ENCODE measurements at regions of chr17 and their contacts with region 1.

Region 1: GRCh38 chr17:4565209-4566141 is 5.1 kb upstream of the GGT6 start:
- DNase-seq: peak; percentile 92
- ATAC-seq: peak; percentile 90 to 92
- H3K4me3 ChIP-seq: no peak overlapping the region
- H3K27ac ChIP-seq: peak overlapping the region in 1 of 2 experiments; percentile 25; a peak in 1 of 6 replicates
- H3K4me1 ChIP-seq: 0 out of 3 replicates have a peak, but pooled peaks cover 4% of the 10 kb centered on the region
- CTCF ChIP-seq: peak; percentile 96
- EP300 ChIP-seq: no peak
- POLR2A ChIP-seq: no peak
- RAD21 ChIP-seq: peak; percentile 51 to 68

Region 2: DNA sequence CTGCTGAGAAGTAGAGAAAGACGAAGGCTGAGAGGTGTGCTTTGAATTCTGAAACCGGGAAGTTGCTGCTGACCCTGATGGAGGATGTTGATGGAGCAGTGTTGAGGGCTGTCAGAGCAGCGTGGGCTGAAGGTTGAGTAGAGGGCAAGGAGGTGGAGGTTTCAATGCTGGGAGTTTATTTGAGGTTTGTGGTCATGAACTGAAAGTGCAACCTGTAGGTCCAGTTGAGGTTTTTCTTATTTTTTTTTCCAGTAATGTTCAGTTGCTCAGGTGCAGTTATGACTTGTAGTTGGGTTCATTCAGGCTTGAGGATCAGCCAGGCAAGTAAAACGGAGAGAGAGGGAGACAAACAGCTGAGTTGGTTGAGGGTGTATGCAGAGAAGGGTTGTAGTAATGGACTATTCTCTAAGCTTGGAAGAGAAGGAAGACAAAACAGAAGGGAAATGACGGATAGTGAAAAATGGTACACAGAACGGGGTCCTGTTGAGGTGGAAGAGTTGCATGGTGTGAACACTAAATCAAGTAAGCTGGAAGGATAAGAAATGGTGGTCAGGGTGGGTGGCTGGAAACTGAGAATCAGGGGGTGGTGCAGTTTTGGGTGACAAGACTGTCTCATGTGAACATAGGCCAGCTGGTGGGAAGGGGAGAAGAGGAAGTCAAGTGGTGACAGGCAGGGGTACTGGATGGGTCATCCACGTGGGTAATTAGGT is 190.3 kb before region 1 on chr17:
- CTCF ChIA-PET with region 1: no interaction called
- POLR2A ChIA-PET with region 1: no interaction called
- DNase-seq: no peak
- ATAC-seq: no peak; a peak in 3 of 6 replicates
- H3K4me3 ChIP-seq: no peak overlapping the region
- H3K27ac ChIP-seq: no peak overlapping the region
- H3K4me1 ChIP-seq: no peaks in the 10 kb centered on the region
- CTCF ChIP-seq: no peak
- EP300 ChIP-seq: no peak
- POLR2A ChIP-seq: no peak
- RAD21 ChIP-seq: no peak

Region 3: GRCh38 chr17:4420692-4421131 is 144.8 kb before region 1 on chr17:
- CTCF ChIA-PET with region 1: interaction called, 14 read pairs
- POLR2A ChIA-PET with region 1: no interaction called
- DNase-seq: peak; percentile 85 to 90
- ATAC-seq: peak; percentile 93 to 95
- H3K4me3 ChIP-seq: no peak overlapping the region
- H3K27ac ChIP-seq: no peak overlapping the region
- H3K4me1 ChIP-seq: no peaks in the 10 kb centered on the region
- CTCF ChIP-seq: peak; percentile 90
- EP300 ChIP-seq: no peak
- POLR2A ChIP-seq: no peak
- RAD21 ChIP-seq: peak; percentile 85 to 93

Region 4: DNA sequence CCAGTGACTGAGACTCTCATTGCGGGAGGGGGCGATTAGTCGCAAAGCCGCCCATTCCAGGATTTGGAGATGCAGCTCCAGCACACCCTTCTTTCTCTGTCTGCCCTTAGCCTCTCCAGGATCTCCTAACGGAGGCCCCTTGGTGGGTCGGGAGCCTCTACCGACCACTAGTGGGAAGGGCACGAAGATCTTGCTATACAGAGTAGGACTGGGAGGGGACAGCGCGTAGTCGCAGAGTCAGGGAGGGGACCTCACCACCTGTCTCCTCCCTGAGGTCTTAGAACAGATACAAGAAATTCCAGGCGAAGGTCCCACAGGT is 18.3 kb after region 1 on chr17:
- CTCF ChIA-PET with region 1: interaction called, 186 read pairs
- POLR2A ChIA-PET with region 1: interaction called, 4 read pairs
- DNase-seq: peak; percentile 68 to 94
- ATAC-seq: peak; percentile 73 to 91
- H3K4me3 ChIP-seq: peak overlapping the region; percentile 49
- H3K27ac ChIP-seq: peak overlapping the region; percentile 23 to 70; a peak in 3 of 6 replicates
- H3K4me1 ChIP-seq: peaks cover 7% of the 10 kb centered on the region; the same call in 2 of the 3 replicates
- CTCF ChIP-seq: no peak; the same call in 2 of the 3 replicates
- EP300 ChIP-seq: no peak
- POLR2A ChIP-seq: no peak
- RAD21 ChIP-seq: no peak

Region 5: DNA sequence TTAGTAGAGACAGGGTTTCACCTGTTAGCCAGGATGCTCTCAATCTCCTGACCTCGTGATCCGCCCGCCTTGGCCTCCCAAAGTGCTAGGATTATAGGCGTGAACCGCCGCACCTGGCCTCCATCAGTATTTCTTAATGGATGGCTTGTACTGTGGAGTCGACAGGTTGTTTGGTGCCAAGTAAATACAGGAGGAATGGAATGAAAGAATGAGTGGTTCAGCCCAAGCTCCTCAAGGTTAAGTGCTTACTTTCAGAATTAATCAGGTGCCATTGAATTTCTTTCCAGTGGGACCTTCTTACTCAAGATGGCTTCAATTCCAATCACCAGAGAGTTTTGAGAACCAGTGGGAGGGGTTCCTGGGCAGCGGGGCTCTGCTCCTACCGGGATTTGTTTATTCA is 51.0 kb after region 1 on chr17:
- CTCF ChIA-PET with region 1: interaction called, 238 read pairs
- POLR2A ChIA-PET with region 1: no interaction called
- DNase-seq: no peak
- ATAC-seq: no peak
- H3K4me3 ChIP-seq: no peak overlapping the region
- H3K27ac ChIP-seq: no peak overlapping the region
- H3K4me1 ChIP-seq: no peaks in the 10 kb centered on the region
- CTCF ChIP-seq: no peak
- EP300 ChIP-seq: no peak
- POLR2A ChIP-seq: no peak
- RAD21 ChIP-seq: no peak

Region 6: DNA sequence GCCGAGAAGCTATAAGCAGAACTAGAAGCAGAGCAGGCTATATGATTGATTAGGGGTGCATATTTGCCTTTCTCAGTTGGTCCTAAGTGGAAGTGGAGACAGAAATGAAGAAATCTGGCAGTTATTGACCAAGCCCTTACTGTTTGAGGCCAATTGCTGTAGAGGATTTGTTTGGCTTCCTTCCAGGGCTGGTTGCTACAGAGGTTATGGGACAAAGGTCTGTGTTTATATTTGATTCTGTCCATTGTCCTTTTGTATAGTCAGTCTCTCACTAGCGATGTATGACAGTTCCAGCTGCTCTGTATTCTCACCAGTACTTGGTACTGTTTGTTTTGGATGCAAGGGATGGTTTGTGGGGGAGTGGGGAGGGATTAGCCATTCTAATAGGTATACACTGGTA is 83.3 kb after region 1 on chr17:
- CTCF ChIA-PET with region 1: interaction called, 14 read pairs
- POLR2A ChIA-PET with region 1: no interaction called
- DNase-seq: no peak
- ATAC-seq: peak; percentile 24 to 48; a peak in 3 of 6 replicates
- H3K4me3 ChIP-seq: no peak overlapping the region
- H3K27ac ChIP-seq: no peak overlapping the region
- H3K4me1 ChIP-seq: peaks cover 6% of the 10 kb centered on the region; the same call in 1 of the 3 replicates
- CTCF ChIP-seq: no peak
- EP300 ChIP-seq: no peak
- POLR2A ChIP-seq: no peak
- RAD21 ChIP-seq: no peak

Region 7: GRCh38 chr17:4891411-4892342 is 326.2 kb after region 1 on chr17:
- CTCF ChIA-PET with region 1: interaction called, 31 read pairs
- POLR2A ChIA-PET with region 1: no interaction called
- DNase-seq: no peak
- ATAC-seq: no peak
- H3K4me3 ChIP-seq: no peak overlapping the region
- H3K27ac ChIP-seq: no peak overlapping the region
- H3K4me1 ChIP-seq: no peaks in the 10 kb centered on the region
- CTCF ChIP-seq: no peak
- EP300 ChIP-seq: no peak
- POLR2A ChIP-seq: no peak
- RAD21 ChIP-seq: no peak

Measured in A549 (cell line).